ENCODE measurements at regions of chr13 and their contacts with region 1.

Region 1: GRCh38 chr13:99916366-99917103 is 55.0 kb downstream of the ZIC5 start:
- DNase-seq: no peak
- H3K4me3 ChIP-seq: no peak overlapping the region
- CTCF ChIP-seq: peak in 1 of 3 donors; percentile 87
- POLR2A ChIP-seq: no peak

Region 2: GRCh38 chr13:98813993-98814392 is 1102.5 kb before region 1 on chr13:
- intact Hi-C with region 1: no loop called
- DNase-seq: no peak
- H3K4me3 ChIP-seq: no peak overlapping the region
- CTCF ChIP-seq: no peak
- POLR2A ChIP-seq: no peak

Region 3: GRCh38 chr13:99331881-99332293 is 584.6 kb before region 1 on chr13:
- intact Hi-C with region 1: no loop called
- DNase-seq: no peak
- H3K4me3 ChIP-seq: no peak overlapping the region
- CTCF ChIP-seq: no peak
- POLR2A ChIP-seq: no peak

Region 4: GRCh38 chr13:100235311-100235901 is 318.9 kb after region 1 on chr13:
- intact Hi-C with region 1: loop called (anchors 10 kb)
- DNase-seq: no peak
- H3K4me3 ChIP-seq: no peak overlapping the region
- CTCF ChIP-seq: no peak
- POLR2A ChIP-seq: no peak